ENCODE measurements at regions of chr2 and their contacts with region 1.

Region 1: DNA sequence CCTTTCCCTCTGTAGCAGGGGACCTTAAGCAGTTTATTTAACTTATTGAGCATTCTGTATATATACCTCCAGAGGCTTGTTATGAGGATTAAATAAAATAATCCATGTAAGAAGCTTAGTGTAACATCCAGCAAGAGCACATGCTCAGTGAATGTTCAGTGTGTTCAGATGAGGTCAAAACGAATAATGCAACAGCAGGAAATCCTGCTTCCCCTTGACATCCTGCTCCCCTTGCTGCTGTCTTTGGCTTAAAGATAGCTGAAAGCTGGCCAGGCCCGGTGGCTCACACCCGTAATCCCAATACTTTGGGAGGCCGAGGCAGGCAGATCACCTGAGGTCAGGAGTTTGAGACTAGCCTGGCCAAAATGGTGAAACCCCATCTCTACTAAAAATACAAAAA is 68.7 kb downstream of the COL4A4 start:
- DNase-seq: no peak
- ATAC-seq: no peak
- H3K4me3 ChIP-seq: no peak overlapping the region
- H3K27ac ChIP-seq: no peak overlapping the region
- H3K4me1 ChIP-seq: no peaks in the 10 kb centered on the region
- H3K27me3 ChIP-seq: no peaks in the 10 kb centered on the region; the same call in 1 of the 2 replicates
- CTCF ChIP-seq: no peak
- POLR2A ChIP-seq: no peak
- RAD21 ChIP-seq: no peak

Region 2: GRCh38 chr2:226813148-226813701 is 282.1 kb before region 1 on chr2:
- CTCF ChIA-PET with region 1: no interaction called
- POLR2A ChIA-PET with region 1: no interaction called
- dilution Hi-C with region 1: no loop called
- in situ Hi-C with region 1: loop called (anchors 10 kb)
- intact Hi-C with region 1: no loop called
- DNase-seq: no peak
- ATAC-seq: no peak
- H3K4me3 ChIP-seq: no peak overlapping the region
- H3K27ac ChIP-seq: no peak overlapping the region
- H3K4me1 ChIP-seq: no peaks in the 10 kb centered on the region
- H3K27me3 ChIP-seq: no peaks in the 10 kb centered on the region
- CTCF ChIP-seq: peak; percentile 49
- POLR2A ChIP-seq: no peak
- RAD21 ChIP-seq: peak; percentile 57